ENCODE measurements at regions of chr9 and their contacts with region 1.

Region 1: DNA sequence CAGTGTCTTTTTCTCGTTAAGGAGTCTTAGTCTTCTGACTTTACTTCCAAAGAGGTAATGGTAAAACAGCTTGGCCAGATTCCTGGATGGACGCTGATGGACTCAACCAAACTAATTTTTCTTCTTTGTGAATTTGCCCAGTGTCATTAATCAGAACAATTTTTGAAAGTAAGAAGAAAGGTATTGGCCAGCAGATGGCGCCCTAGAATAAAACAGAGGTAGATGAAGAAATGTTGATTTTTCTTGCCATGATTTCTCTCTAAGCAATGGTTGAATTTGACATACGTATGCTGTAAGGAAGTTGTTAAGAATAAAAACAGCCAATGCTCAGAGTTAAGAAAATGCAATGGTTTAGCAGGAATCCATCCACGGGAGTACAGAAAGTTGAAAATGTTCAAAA is 500.0 kb downstream of the DIRAS2 start:
- DNase-seq: peak; percentile 74
- ATAC-seq: no peak
- H3K4me3 Mint-ChIP-seq: no peak overlapping the region
- H3K27ac Mint-ChIP-seq: no peak overlapping the region
- H3K4me1 Mint-ChIP-seq: no peaks in the 10 kb centered on the region
- H3K27me3 Mint-ChIP-seq: peaks cover 30% of the 10 kb centered on the region

Region 2: GRCh38 chr9:89274838-89275237 is 867.7 kb before region 1 on chr9:
- CTCF ChIA-PET with region 1: no interaction called
- POLR2A ChIA-PET with region 1: no interaction called
- intact Hi-C with region 1: no loop called
- DNase-seq: peak; percentile 63
- ATAC-seq: peak; percentile 91
- H3K4me3 Mint-ChIP-seq: no peak overlapping the region
- H3K27ac Mint-ChIP-seq: no peak overlapping the region
- H3K4me1 Mint-ChIP-seq: peaks cover 33% of the 10 kb centered on the region
- H3K27me3 Mint-ChIP-seq: peaks cover 4% of the 10 kb centered on the region

Region 3: DNA sequence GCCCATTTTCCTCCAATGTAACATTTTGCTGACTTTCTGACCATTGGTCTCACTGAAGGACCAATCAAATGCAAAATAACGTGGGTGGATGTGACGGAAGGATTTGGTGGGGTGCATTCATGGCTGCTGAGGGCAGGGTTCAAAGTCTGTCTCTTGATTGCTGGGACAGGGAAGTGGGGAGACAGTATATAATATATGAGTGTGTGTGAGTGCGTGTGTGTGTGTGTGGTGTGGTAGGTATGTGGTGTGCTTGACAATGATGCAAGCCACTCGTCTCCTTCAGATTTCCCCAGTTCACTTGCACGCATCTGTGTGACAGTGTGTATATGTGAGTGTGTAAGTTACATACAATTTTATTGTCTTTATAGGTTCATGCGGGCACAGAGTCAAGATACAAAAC is 22.7 kb after region 1 on chr9:
- CTCF ChIA-PET with region 1: interaction called, 3 read pairs
- POLR2A ChIA-PET with region 1: no interaction called
- intact Hi-C with region 1: loop called in 1 of 2 experiments (anchors 2 kb)
- DNase-seq: no peak
- ATAC-seq: no peak
- H3K4me3 Mint-ChIP-seq: no peak overlapping the region
- H3K27ac Mint-ChIP-seq: no peak overlapping the region
- H3K4me1 Mint-ChIP-seq: no peaks in the 10 kb centered on the region
- H3K27me3 Mint-ChIP-seq: peaks cover 3% of the 10 kb centered on the region

Region 4: DNA sequence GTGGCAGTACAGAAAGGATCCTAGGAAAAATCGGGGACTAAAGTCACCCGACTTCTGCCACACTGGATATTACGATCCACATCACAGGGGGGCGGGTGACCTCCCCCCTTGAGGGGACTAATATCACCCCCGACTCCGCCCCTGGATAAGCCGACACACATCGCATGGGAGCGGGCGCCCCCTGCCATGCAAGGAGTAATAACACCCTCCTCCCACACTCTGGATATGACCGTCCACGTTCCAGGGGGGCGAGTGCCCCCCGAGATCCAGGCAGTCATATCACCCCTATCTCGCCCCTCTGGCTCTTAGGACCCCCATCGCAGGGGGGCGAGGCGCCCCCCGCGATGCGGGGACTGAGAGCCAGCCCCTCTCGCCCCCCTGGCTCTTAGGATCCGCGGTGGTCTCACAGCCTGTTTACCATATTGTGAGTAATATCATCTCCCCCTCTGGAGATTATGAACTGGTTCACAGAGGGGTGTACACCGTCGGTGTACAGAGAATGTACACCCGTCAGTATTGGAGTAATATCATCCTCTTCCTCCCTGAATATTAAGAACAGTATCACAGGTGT is 77.1 kb after region 1 on chr9:
- CTCF ChIA-PET with region 1: no interaction called
- POLR2A ChIA-PET with region 1: no interaction called
- intact Hi-C with region 1: loop called in 1 of 2 experiments (anchors 5 kb)
- DNase-seq: peak; percentile 63
- ATAC-seq: peak; percentile 71
- H3K4me3 Mint-ChIP-seq: no peak overlapping the region
- H3K27ac Mint-ChIP-seq: no peak overlapping the region
- H3K4me1 Mint-ChIP-seq: peaks cover 2% of the 10 kb centered on the region
- H3K27me3 Mint-ChIP-seq: peaks cover 10% of the 10 kb centered on the region

Region 5: GRCh38 chr9:90261698-90262097 is 119.1 kb after region 1 on chr9:
- CTCF ChIA-PET with region 1: no interaction called
- POLR2A ChIA-PET with region 1: no interaction called
- intact Hi-C with region 1: no loop called
- DNase-seq: no peak
- ATAC-seq: no peak
- H3K4me3 Mint-ChIP-seq: no peak overlapping the region
- H3K27ac Mint-ChIP-seq: no peak overlapping the region
- H3K4me1 Mint-ChIP-seq: no peaks in the 10 kb centered on the region
- H3K27me3 Mint-ChIP-seq: peaks cover 21% of the 10 kb centered on the region

Region 6: DNA sequence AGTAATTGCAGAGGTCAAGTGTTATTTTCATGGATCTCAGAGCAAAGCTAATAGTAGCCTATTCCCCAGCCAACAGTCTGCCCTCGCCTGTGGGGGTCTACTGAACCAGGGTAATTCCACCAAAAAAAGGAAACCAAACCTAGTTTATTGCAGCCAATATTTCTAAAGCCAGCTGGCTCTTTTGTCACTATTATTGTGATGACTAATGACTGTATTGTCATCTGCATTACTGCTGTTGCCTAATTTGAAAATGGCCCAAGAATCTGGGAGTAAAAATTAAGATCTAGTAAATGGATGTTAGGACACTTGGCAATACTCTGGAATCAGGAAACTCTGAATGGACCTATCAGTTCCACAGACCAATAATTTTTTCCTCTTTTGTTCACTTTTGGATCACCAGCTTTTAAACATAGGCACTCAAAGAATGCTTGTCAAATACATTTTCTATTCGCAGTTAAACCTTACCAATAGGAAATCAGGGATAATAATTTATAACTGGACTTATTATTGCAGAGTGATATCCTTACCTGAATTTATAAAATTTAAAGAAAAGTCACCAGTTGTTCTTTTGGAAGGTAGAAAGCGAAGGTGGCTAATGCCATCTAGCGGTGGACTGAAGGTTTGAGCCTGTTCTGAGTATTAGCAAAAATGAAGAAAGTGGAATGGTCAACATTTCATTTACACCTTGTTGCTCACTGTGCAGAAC is 728.2 kb after region 1 on chr9:
- CTCF ChIA-PET with region 1: interaction called, 5 read pairs
- POLR2A ChIA-PET with region 1: no interaction called
- intact Hi-C with region 1: loop called (anchors 1 to 2 kb)
- DNase-seq: peak; percentile 57
- ATAC-seq: no peak
- H3K4me3 Mint-ChIP-seq: no peak overlapping the region
- H3K27ac Mint-ChIP-seq: no peak overlapping the region
- H3K4me1 Mint-ChIP-seq: no peaks in the 10 kb centered on the region
- H3K27me3 Mint-ChIP-seq: peaks cover 1% of the 10 kb centered on the region

Measured in activated CD4-positive, alpha-beta T cell treated with anti-CD3 and anti-CD28 coated beads for 36 hours (primary cell).